ENCODE measurements at regions of chr1 and their contacts with region 1.

Region 1: GRCh38 chr1:167095368-167095767 is 1.5 kb downstream of the STYXL2 start:
- DNase-seq: peak; percentile 96
- ATAC-seq: peak; percentile 89
- H3K4me3 ChIP-seq: peak overlapping the region; percentile 5; the same call in 1 of the 2 replicates
- H3K27ac ChIP-seq: peak overlapping the region; percentile 10; the same call in 1 of the 2 replicates
- H3K4me1 ChIP-seq: peaks cover 20% of the 10 kb centered on the region
- H3K27me3 ChIP-seq: no peaks in the 10 kb centered on the region
- CTCF ChIP-seq: no peak

Region 2: GRCh38 chr1:166924823-166925541 is 170.4 kb before region 1 on chr1:
- CTCF ChIA-PET with region 1: no interaction called
- POLR2A ChIA-PET with region 1: no interaction called
- intact Hi-C with region 1: no loop called
- DNase-seq: no peak
- ATAC-seq: no peak
- H3K4me3 ChIP-seq: no peak overlapping the region
- H3K27ac ChIP-seq: no peak overlapping the region
- H3K4me1 ChIP-seq: peaks cover 16% of the 10 kb centered on the region
- H3K27me3 ChIP-seq: peaks cover 12% of the 10 kb centered on the region; the same call in 1 of the 2 replicates
- CTCF ChIP-seq: no peak

Region 3: DNA sequence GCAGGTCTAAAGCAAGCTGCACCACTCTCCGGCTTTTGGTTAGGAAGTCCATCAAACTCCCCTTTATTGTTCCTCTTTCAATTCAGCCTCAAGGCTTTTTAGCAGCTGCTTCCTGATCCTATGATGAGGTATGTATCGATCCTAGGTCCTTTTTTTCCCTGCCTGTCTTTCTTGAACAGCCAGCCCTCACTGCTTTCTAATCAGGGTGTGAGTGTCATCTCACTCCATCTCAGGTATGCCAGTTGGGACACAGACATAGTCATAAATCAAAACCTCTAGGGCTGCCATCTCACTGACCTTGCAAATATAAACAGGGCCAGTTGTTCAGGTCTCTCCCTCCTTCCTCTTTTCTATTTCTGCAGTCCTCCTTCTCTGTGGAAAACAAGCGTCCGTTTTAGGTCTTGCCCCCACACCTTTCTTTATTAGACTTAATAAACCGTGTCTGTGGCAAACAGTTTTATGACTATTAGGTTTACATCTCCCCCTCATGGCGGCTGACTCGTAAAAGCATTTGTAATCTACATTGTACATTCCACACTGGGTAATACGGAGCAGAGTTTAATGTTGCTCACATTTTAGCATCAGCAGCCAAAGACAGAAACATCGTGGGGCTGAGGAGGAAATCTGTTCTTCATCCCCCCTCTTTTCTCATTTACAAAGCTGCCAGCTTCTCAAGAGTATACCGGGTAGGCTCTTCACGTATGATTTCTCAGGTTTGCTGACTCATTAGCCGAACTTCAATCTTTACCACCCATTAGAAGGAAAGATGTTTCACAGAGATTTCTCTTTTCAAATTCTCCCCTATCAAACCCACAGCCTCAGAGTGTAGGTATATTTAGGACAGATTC is 10.1 kb after region 1 on chr1:
- CTCF ChIA-PET with region 1: no interaction called
- POLR2A ChIA-PET with region 1: no interaction called
- intact Hi-C with region 1: loop called (anchors 1 kb)
- DNase-seq: peak; percentile 62
- ATAC-seq: peak; percentile 41
- H3K4me3 ChIP-seq: peak overlapping the region; percentile 16; the same call in 1 of the 2 replicates
- H3K27ac ChIP-seq: peak overlapping the region; percentile 36
- H3K4me1 ChIP-seq: peaks cover 54% of the 10 kb centered on the region
- H3K27me3 ChIP-seq: no peaks in the 10 kb centered on the region
- CTCF ChIP-seq: peak; percentile 33; the same call in 1 of the 2 replicates

Region 4: GRCh38 chr1:167121375-167122120 is 26.2 kb after region 1 on chr1:
- CTCF ChIA-PET with region 1: no interaction called
- POLR2A ChIA-PET with region 1: no interaction called
- intact Hi-C with region 1: no loop called
- DNase-seq: peak; percentile 66
- ATAC-seq: peak; percentile 63
- H3K4me3 ChIP-seq: peak overlapping the region; percentile 68
- H3K27ac ChIP-seq: no peak overlapping the region
- H3K4me1 ChIP-seq: no peaks in the 10 kb centered on the region
- H3K27me3 ChIP-seq: no peaks in the 10 kb centered on the region
- CTCF ChIP-seq: no peak

Region 5: DNA sequence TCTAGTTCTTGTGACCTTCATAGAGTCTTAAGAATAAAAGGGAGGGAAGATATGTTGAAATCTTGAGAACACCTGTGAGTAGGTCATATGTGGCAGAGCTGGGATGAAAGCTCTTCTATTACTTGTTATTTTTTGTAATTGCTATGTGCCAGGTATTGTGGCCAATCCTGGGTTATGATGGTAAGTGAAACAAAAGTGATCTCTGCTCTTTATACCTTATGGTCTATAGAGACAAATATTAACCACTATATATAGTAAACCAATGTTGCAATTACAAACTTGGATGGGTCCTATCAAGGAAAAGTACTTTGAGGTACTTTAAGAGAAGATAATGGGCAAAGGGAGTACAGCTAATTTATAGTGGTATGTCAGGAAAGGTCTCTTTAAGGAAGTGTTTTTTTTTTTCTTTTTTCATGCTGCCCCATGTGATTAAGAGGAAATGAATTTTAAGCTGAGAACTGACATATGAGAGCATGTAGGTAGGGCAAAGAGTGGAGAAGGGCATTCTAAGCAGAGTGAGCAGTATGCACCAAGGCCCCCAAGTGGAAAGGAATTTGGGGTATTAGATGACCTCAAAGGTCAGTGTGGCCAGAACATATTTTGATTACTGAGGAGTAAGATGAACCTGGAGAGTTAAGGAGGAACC is 168.6 kb after region 1 on chr1:
- CTCF ChIA-PET with region 1: no interaction called
- POLR2A ChIA-PET with region 1: no interaction called
- intact Hi-C with region 1: no loop called
- DNase-seq: peak; percentile 34
- ATAC-seq: peak; percentile 25; the same call in 1 of the 2 replicates
- H3K4me3 ChIP-seq: no peak overlapping the region
- H3K27ac ChIP-seq: no peak overlapping the region
- H3K4me1 ChIP-seq: peaks cover 14% of the 10 kb centered on the region
- H3K27me3 ChIP-seq: no peaks in the 10 kb centered on the region
- CTCF ChIP-seq: no peak

Region 6: DNA sequence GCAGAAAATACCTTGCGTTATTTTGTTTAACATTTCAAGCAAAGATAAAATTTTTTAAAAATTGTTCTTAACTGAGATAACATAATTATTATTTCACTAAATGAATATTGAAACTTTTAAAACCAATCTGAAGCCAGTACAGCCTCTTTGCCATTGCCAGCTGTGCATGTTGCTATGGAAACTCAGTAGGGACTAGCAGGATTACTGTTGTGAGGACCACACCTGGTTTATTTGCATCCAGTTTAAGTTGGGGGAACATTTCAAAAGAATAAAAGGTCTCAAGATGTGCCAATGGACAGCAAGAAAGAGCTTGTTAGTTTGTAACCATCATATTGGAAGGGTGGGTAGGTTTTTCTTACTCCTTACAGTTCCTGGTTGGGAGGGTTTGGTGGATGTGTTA is 206.0 kb after region 1 on chr1:
- CTCF ChIA-PET with region 1: no interaction called
- POLR2A ChIA-PET with region 1: no interaction called
- intact Hi-C with region 1: no loop called
- DNase-seq: no peak
- ATAC-seq: no peak
- H3K4me3 ChIP-seq: no peak overlapping the region
- H3K27ac ChIP-seq: no peak overlapping the region
- H3K4me1 ChIP-seq: peaks cover 12% of the 10 kb centered on the region; the same call in 1 of the 2 replicates
- H3K27me3 ChIP-seq: no peaks in the 10 kb centered on the region
- CTCF ChIP-seq: no peak

Measured in PC-3 (cell line).